Activated T-helper 2 cell treated with anti-CD3 and anti-CD28 coated beads, Interferon-gamma antibody, Interleukin-2, Interleukin-4, amounts not matched to agents 10 μg/mL and 5 μg/mL and 100 μg/mL, durations not matched to agents 14 hours and 24 hours and 36 hours (primary cell): ENCODE measurements at regions of chr10 and their contacts with region 1.

Region 1: GRCh38 chr10:89163265-89163995 is 43.7 kb downstream of the CH25H start:
- DNase-seq: peak; percentile 59
- H3K4me3 Mint-ChIP-seq: peak overlapping the region; percentile 55
- H3K27ac Mint-ChIP-seq: peak overlapping the region; percentile 44
- H3K4me1 Mint-ChIP-seq: peaks cover 35% of the 10 kb centered on the region
- H3K27me3 Mint-ChIP-seq: peaks cover 32% of the 10 kb centered on the region

Region 2: DNA sequence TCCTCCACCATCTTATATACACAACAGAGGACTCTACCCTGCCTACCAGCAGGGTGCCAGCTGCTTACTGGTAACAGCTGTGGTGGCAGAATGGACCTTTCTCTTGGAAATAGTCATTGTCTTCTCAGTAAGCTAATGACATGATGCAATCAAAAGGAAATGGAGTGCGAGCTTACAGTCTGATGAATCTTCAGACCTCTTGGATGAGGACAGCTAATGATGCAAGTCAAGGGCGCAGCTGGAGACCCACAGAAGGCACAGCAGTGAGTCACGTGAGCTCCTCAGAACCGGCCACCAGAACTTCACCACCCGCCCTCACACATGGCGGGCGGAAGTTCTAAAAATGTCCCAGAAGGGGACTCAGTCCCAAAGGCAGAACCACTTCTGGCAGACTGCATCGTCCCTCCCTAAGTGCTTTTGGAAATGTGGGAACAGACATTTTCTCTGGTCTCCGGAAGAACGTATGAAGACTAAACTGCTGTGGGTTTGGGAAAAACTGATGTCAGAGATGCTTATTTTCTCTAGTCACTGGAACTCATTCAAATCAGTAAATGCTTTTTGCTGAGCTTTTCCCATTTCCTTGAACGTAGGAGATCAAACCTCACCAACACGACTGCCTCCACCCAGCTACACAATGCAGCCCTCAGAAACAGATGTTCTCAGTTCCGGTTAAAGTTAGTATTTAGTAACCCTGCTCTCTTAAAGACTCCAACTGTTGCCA is 76.5 kb before region 1 on chr10:
- intact Hi-C with region 1: loop called (anchors 1 kb)
- DNase-seq: no peak
- H3K4me3 Mint-ChIP-seq: no peak overlapping the region
- H3K27ac Mint-ChIP-seq: no peak overlapping the region
- H3K4me1 Mint-ChIP-seq: peaks cover 13% of the 10 kb centered on the region
- H3K27me3 Mint-ChIP-seq: no peaks in the 10 kb centered on the region

Region 3: GRCh38 chr10:89207181-89207800 is 43.9 kb after region 1 on chr10 and contains the start of gene CH25H:
- intact Hi-C with region 1: loop called (anchors 5 kb)
- DNase-seq: peak; percentile 26
- H3K4me3 Mint-ChIP-seq: peak within 1 kb of the TSS; percentile 75
- H3K27ac Mint-ChIP-seq: no peak within 1 kb of the TSS
- H3K4me1 Mint-ChIP-seq: peaks cover 16% of the 10 kb centered on the region
- H3K27me3 Mint-ChIP-seq: peaks cover 48% of the 10 kb centered on the region
- total RNA-seq, gene CH25H: not detected in 2 replicates

Region 4: DNA sequence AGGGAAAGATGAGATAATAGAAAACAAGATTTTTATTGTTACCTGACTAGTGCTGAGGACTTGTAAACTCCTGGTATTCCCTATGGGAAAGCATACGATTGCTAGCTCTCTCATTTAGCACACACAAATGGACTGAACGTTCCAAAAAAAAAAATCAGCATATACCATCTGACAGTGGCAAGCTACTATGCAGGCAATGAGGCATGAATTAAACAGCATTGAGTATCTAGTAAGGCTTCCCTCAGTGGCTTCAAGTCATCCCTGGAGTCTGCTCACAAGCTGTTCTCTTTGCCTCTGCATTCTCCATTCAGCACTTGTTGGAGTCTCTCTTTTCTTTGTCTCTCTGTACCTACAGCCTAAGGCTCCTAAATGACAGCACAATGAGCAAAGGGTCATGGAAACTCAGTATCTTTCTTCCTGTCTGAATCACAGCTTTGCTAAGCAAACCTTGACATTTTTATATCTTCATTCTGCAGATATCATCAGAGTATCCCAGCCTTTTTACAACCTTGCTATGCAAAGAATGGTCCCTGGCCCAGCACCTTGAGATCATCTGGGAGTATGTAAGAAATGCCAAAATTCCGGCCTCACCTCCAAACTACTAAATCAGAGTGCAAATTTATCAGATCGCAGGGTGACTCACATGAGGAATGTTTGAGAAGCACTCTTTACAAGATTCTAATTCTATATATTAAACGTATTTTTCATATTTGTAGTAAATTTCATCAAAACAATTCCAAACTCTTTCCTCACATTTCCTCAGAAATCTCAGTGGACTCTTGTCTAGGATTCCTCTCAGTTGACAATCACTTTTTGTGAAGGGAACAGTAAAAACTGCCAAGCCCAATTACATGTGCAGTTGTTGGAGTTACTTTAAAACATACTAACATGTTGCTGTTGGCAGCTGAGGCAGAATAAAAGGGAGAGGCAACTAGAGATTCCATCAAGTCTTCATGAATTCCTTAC is 98.9 kb after region 1 on chr10:
- intact Hi-C with region 1: no loop called
- DNase-seq: no peak
- H3K4me3 Mint-ChIP-seq: no peak overlapping the region
- H3K27ac Mint-ChIP-seq: no peak overlapping the region
- H3K4me1 Mint-ChIP-seq: peaks cover 10% of the 10 kb centered on the region
- H3K27me3 Mint-ChIP-seq: peaks cover 24% of the 10 kb centered on the region